Activated B cell treated with CpG ODN at 0.5 μM for 24 hours (primary cell): ENCODE measurements at regions of chr4 and their contacts with region 1.

Region 1: GRCh38 chr4:6673660-6674499 is 19.8 kb upstream of the S100P start:
- DNase-seq: peak; percentile 93
- ATAC-seq: peak; percentile 88
- H3K4me3 Mint-ChIP-seq: peak overlapping the region; percentile 91
- H3K27ac Mint-ChIP-seq: peak overlapping the region; percentile 96
- H3K4me1 Mint-ChIP-seq: peaks cover 55% of the 10 kb centered on the region
- H3K27me3 Mint-ChIP-seq: no peaks in the 10 kb centered on the region
- CTCF ChIP-seq: no peak

Region 2: DNA sequence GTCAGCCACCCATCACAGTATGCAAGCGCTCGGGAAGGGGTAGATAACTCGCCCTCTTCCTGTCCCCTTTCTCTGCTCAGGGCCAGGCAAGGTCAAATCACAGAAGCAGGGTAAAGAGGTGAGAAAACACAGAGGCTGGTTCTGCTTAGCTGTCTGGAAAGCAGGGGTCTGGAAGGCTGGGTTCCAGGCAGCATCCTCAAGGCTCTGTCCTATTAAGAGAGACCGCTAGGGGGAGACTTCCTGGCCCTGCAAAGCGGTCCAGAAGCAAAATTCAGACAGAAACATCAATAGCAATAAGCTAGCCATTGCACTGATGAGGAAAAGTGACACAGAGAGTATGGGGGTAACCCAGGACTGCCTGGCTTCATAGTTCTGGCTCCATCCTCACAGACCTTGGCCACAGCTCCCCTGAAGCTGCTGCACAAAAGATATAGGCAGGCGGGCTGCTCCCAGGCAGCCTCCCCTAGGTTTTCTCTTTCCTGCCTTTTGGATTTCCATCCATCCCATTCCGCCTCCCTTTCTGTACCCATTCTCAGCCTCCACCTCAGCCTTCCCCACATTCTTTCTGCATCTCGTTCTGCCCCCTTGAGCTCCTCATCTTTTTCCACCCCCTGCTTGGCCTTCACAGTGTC is 1274.0 kb before region 1 on chr4:
- CTCF ChIA-PET with region 1: no interaction called
- POLR2A ChIA-PET with region 1: no interaction called
- intact Hi-C with region 1: no loop called
- DNase-seq: no peak
- ATAC-seq: no peak
- H3K4me3 Mint-ChIP-seq: no peak overlapping the region
- H3K27ac Mint-ChIP-seq: no peak overlapping the region
- H3K4me1 Mint-ChIP-seq: no peaks in the 10 kb centered on the region
- H3K27me3 Mint-ChIP-seq: no peaks in the 10 kb centered on the region
- CTCF ChIP-seq: no peak

Region 3: GRCh38 chr4:6574747-6575502 is 99.0 kb before region 1 on chr4 and contains the start of gene MAN2B2:
- CTCF ChIA-PET with region 1: no interaction called
- POLR2A ChIA-PET with region 1: interaction called, 14 read pairs
- intact Hi-C with region 1: loop called (anchors 1 kb)
- DNase-seq: peak; percentile 86
- ATAC-seq: peak; percentile 96
- H3K4me3 Mint-ChIP-seq: peak within 1 kb of the TSS; percentile 88
- H3K27ac Mint-ChIP-seq: peak within 1 kb of the TSS; percentile 74
- H3K4me1 Mint-ChIP-seq: peaks cover 14% of the 10 kb centered on the region
- H3K27me3 Mint-ChIP-seq: no peaks in the 10 kb centered on the region
- CTCF ChIP-seq: no peak
- total RNA-seq, gene MAN2B2: 24.2 and 24.7 TPM in 2 replicates

Region 4: DNA sequence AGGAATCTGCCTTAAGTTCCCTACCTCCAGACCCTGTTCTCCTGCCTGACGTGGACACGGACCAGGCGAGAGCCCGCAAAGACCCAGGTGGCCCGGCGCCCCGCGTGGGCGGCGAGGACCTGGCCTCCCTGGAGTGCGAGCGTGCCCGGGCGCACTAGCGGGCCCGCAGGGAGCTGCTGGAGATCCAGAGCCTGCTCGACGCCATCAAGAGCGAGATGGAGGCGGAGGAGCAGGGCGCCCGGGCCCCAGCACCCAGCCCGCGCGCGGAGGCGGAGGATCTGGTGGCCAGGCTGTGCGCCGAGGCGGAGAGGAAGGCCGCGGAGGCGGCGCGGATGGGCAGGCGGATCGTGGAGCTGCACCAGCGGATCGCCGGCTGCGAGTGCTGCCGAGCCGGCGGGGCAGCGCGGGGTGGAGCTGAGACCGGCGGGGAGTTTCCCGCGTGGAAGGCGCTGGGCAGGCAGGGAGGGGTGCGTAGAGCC is 15.2 kb before region 1 on chr4:
- CTCF ChIA-PET with region 1: no interaction called
- POLR2A ChIA-PET with region 1: interaction called, 11 read pairs
- intact Hi-C with region 1: no loop called
- DNase-seq: no peak
- ATAC-seq: peak; percentile 81
- H3K4me3 Mint-ChIP-seq: peak overlapping the region; percentile 71
- H3K27ac Mint-ChIP-seq: no peak overlapping the region
- H3K4me1 Mint-ChIP-seq: peaks cover 3% of the 10 kb centered on the region
- H3K27me3 Mint-ChIP-seq: peaks cover 18% of the 10 kb centered on the region
- CTCF ChIP-seq: no peak

Region 5: DNA sequence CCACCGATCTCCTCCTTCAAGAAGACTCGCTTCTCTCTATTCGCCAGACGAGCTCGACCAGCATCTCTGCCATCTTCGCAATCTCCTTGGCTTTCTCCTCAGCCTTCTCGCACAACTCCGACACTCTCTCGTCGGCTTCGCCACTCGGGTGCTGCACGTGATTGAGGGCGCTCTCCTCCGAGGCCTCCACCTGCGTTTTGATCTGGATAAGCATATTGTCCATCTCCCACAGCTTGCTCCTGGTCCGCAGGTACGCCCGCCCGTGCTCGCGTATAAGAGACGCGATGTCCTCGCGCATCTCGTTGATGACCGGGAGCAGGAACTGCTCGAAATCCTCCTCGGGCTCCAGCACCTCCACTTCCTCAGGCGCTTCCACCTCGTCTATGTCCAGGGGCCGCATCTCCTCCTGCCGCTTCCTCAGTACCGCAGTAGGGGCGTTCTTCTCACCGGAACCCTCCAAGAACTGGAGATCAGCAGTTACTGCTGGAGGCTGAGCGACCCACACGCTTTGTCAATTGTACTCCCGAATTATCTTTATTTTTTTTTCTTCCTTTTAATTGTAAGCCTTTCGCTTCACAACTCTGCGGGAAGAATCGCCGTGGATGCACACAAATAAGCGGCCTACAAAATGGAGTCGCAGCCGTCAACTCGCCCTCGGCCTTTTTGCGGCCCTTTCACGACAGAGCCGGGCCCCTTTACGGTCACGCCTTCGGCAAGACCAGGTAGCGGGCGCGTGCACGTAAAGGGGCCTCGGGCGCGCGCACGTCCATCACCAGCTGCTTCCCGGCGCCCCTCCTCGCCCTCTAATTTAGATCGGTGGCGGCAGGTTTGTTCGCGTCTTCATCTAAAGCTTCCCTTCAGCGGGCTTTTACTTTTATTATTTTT is 35.6 kb after region 1 on chr4 and contains the start of gene MRFAP1L1:
- CTCF ChIA-PET with region 1: interaction called, 5 read pairs
- POLR2A ChIA-PET with region 1: interaction called, 42 read pairs
- intact Hi-C with region 1: loop called (anchors 1 kb)
- DNase-seq: peak; percentile 93
- ATAC-seq: peak; percentile 84
- H3K4me3 Mint-ChIP-seq: peak within 1 kb of the TSS; percentile 99
- H3K27ac Mint-ChIP-seq: peak within 1 kb of the TSS; percentile 96
- H3K4me1 Mint-ChIP-seq: peaks cover 64% of the 10 kb centered on the region
- H3K27me3 Mint-ChIP-seq: peaks cover 3% of the 10 kb centered on the region
- CTCF ChIP-seq: no peak
- total RNA-seq, gene MRFAP1L1: 39.1 and 39.5 TPM in 2 replicates

Region 6: DNA sequence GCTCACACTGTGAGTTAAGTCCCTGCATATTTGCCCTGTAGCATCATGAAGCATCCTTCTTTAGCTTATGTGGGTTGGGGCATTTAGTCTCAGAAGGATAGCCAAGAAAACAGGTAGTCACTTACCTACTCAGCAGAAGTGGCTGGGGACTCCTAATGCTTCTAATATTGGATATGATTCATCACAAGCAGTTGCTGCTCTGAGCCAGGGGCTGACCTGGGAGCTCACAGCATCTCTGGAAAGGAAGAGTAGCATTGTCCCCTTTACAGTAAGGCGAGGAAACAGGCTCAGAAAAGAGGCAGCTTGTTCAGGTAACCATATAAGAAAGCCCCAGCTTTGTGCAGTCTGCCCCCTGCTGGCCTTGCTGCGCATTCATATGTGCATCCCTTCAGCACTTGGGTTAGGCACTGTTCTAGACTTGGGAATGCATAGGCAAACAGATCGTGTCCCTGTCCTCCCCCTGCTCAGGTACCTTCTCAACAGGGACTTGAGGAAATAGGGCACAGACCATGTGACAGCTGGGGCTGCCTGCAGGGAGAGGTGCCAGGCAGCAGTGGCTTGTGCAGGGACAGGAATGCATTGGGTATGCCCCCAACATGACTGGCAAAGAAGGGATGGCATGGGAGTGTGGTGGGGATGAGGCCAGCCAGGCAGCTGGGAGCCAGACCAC is 200.0 kb after region 1 on chr4:
- CTCF ChIA-PET with region 1: interaction called, 9 read pairs
- POLR2A ChIA-PET with region 1: no interaction called
- intact Hi-C with region 1: loop called (anchors 1 kb)
- DNase-seq: peak; percentile 50
- ATAC-seq: peak; percentile 74
- H3K4me3 Mint-ChIP-seq: no peak overlapping the region
- H3K27ac Mint-ChIP-seq: no peak overlapping the region
- H3K4me1 Mint-ChIP-seq: peaks cover 12% of the 10 kb centered on the region
- H3K27me3 Mint-ChIP-seq: no peaks in the 10 kb centered on the region
- CTCF ChIP-seq: no peak

Region 7: GRCh38 chr4:6909073-6909965 is 235.4 kb after region 1 on chr4 and contains the start of gene TBC1D14:
- CTCF ChIA-PET with region 1: no interaction called
- POLR2A ChIA-PET with region 1: interaction called, 7 read pairs
- intact Hi-C with region 1: loop called (anchors 1 kb)
- DNase-seq: peak; percentile 88
- ATAC-seq: peak; percentile 89
- H3K4me3 Mint-ChIP-seq: peak within 1 kb of the TSS; percentile 87
- H3K27ac Mint-ChIP-seq: peak within 1 kb of the TSS; percentile 86
- H3K4me1 Mint-ChIP-seq: peaks cover 43% of the 10 kb centered on the region
- H3K27me3 Mint-ChIP-seq: peaks cover 5% of the 10 kb centered on the region
- CTCF ChIP-seq: no peak
- total RNA-seq, gene TBC1D14: 35.1 and 35.2 TPM in 2 replicates

Region 8: DNA sequence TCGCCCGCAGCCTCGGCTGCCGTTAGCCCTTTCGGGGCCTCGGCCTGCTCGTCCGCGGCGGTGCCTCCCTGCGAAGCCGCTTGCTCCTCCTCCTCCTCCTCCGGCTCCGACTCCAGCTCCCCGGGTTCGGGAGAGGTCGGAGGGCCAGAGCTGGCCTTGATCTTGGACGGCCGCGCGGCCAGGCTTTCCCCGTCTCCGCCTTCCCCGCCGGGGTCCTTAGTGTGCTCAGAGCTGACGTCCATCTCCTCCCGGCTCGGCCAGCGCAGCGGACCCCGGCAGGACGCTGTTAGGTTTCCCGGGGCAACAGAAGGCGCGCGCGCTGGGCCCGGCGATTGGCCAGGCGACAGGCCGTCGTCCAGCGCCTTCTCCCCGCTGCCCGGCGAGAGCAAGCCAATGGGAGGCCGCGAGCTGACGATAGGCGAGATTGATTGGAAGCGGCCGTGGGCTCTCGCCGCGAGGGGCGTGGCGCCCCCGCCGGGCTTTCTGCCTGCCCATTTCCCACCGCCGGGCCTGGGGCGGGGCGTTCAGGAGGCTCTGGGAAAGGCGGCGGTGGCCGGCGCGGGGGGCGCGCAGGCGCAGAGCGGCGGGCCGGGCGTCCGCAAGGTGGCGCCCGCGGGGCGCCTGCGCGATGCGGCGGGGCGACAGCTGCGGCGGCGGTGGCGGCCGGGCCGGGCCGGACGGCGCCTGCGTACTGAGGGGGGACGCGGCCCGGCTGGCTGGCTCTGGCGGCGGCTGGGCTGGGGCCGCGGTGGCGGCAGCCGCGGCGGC is 369.0 kb after region 1 on chr4 and contains the start of gene TADA2B:
- CTCF ChIA-PET with region 1: no interaction called
- POLR2A ChIA-PET with region 1: interaction called, 6 read pairs
- intact Hi-C with region 1: loop called (anchors 2 kb)
- DNase-seq: peak; percentile 96
- ATAC-seq: peak; percentile 87
- H3K4me3 Mint-ChIP-seq: peak within 1 kb of the TSS; percentile 93
- H3K27ac Mint-ChIP-seq: peak within 1 kb of the TSS; percentile 85
- H3K4me1 Mint-ChIP-seq: peaks cover 54% of the 10 kb centered on the region
- H3K27me3 Mint-ChIP-seq: no peaks in the 10 kb centered on the region
- CTCF ChIP-seq: no peak
- total RNA-seq, gene TADA2B: 26.7 and 31.8 TPM in 2 replicates

Region 9: GRCh38 chr4:7945709-7946380 is 1272.0 kb after region 1 on chr4:
- CTCF ChIA-PET with region 1: no interaction called
- POLR2A ChIA-PET with region 1: no interaction called
- intact Hi-C with region 1: no loop called
- DNase-seq: no peak
- ATAC-seq: no peak
- H3K4me3 Mint-ChIP-seq: no peak overlapping the region
- H3K27ac Mint-ChIP-seq: no peak overlapping the region
- H3K4me1 Mint-ChIP-seq: peaks cover under 1% of the 10 kb centered on the region
- H3K27me3 Mint-ChIP-seq: peaks cover 19% of the 10 kb centered on the region
- CTCF ChIP-seq: no peak